PC-3 (cell line): ENCODE measurements at regions of chr3 and their contacts with region 1.

Region 1: GRCh38 chr3:155391551-155391958 is 98.1 kb upstream of the STRIT1 start:
- DNase-seq: peak; percentile 93
- ATAC-seq: peak; percentile 99
- H3K4me3 ChIP-seq: 0 out of 2 replicates have a peak overlapping the region, but pooled peaks have one; percentile 3
- H3K27ac ChIP-seq: peak overlapping the region; percentile 51
- H3K4me1 ChIP-seq: peaks cover 26% of the 10 kb centered on the region
- H3K27me3 ChIP-seq: no peaks in the 10 kb centered on the region
- CTCF ChIP-seq: no peak

Region 2: DNA sequence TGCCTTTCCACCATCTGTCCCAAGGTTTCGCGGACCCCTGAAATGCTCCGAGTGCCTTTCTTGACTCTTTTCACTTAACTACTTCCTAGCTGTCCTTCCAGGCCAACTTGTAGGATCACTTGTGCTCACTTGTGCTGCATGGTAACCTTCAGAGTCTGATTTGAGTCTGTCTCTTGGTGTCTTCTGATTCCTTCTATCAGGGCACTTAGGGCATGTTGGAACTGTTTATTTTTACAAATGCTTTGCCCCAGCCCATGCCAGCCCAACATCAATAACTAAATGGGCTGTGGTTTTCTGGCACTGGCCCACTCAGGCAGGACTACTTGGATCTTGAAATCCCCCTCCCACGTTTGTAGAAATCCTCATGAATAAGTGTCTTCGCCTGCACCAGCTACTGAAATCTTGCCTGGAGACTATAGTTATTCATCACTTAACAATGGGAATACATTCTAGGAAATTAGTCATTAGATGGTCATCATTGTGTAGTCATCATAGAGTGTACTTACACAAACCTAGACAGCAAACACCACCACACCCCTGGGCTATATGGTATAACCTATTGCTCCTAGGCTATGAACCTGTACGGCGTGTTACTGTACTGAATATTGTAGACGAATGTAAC is 25.1 kb after region 1 on chr3:
- CTCF ChIA-PET with region 1: no interaction called
- POLR2A ChIA-PET with region 1: no interaction called
- intact Hi-C with region 1: loop called (anchors 1 kb)
- DNase-seq: peak; percentile 97
- ATAC-seq: peak; percentile 96
- H3K4me3 ChIP-seq: peak overlapping the region; percentile 41; the same call in 1 of the 2 replicates
- H3K27ac ChIP-seq: peak overlapping the region; percentile 84
- H3K4me1 ChIP-seq: peaks cover 27% of the 10 kb centered on the region
- H3K27me3 ChIP-seq: no peaks in the 10 kb centered on the region
- CTCF ChIP-seq: no peak